GM12878 (cell line): ENCODE measurements at regions of chr4 and their contacts with region 1.

Region 1: DNA sequence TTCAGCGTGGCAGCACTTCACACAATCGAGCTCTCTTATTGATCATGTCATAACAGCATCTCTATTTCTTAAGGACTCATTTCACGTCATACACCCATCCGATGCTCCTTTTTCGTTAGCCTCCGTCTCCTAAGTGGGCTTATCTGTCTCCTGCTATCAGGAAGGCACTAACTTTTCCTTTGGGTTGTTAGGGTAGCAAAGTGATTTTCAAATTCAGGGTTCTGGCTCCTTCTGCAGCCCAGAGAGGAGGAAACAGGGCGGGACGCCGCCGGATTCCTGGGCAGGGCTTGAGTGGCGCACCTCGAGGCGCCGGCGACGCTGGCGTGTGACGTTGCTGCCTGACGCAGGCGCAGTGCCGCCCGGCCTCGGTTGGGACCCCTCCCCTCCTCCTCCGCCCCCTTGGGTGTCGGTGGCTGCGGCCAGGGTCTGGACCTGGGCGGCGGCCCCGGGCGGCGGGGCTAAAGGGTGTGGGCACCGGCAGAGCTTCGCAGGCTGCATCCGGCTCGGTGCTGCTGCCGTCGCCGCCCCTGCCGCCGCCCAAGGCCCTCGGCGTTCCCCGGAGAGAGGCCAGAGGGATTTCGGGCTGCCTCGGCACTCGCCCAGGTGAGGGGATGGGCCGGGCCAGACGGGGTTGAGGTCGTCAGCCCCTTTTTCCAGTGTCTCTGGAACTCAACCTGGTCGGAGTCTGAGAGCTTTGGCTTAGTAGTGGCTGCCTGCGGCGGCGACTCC is at the start of gene BLTP1:
- DNase-seq: peak; percentile 66
- ATAC-seq: peak; percentile 97
- H3K4me3 ChIP-seq: peak within 1 kb of the TSS; percentile 91
- H3K27ac ChIP-seq: peak within 1 kb of the TSS; percentile 75
- H3K4me1 ChIP-seq: peaks cover 9% of the 10 kb centered on the region
- H3K27me3 ChIP-seq: no peaks in the 10 kb centered on the region
- CTCF ChIP-seq: no peak
- EP300 ChIP-seq: no peak
- POLR2A ChIP-seq: peak; percentile 76
- RAD21 ChIP-seq: no peak
- polyA plus RNA-seq, gene BLTP1: 3.4 to 4.5 TPM

Region 2: GRCh38 chr4:122131562-122132157 is 20.5 kb before region 1 on chr4:
- CTCF ChIA-PET with region 1: no interaction called
- POLR2A ChIA-PET with region 1: interaction called, 5 read pairs
- RAD21 ChIA-PET with region 1: no interaction called
- SMC1A ChIA-PET with region 1: interaction called, 4 read pairs
- in situ Hi-C with region 1: no loop called
- intact Hi-C with region 1: loop called (anchors 2 kb)
- DNase-seq: peak; percentile 25
- ATAC-seq: peak; percentile 90
- H3K4me3 ChIP-seq: no peak overlapping the region; the same call in 1 of the 2 replicates
- H3K27ac ChIP-seq: no peak overlapping the region
- H3K4me1 ChIP-seq: no peaks in the 10 kb centered on the region
- H3K27me3 ChIP-seq: no peaks in the 10 kb centered on the region
- CTCF ChIP-seq: no peak
- EP300 ChIP-seq: peak in 1 of 2 experiments; percentile 49; a peak in 1 of 4 replicates
- POLR2A ChIP-seq: no peak
- RAD21 ChIP-seq: no peak